ENCODE measurements at regions of chr2 and their contacts with region 1.

Region 1: GRCh38 chr2:144320491-144320890 is 199.4 kb downstream of the ZEB2 start:
- DNase-seq: peak in 9 of 10 donors; percentile 21 to 73 (median 43)
- ATAC-seq: peak; percentile 59 to 88
- H3K4me3 Mint-ChIP-seq: peak overlapping the region in 5 of 10 donors; percentile 15 to 54 (median 52)
- H3K27ac Mint-ChIP-seq: peak overlapping the region in 8 of 10 donors; percentile 0 to 94 (median 72)
- H3K4me1 Mint-ChIP-seq: peaks cover 21 to 52% (median 40%) of the 10 kb centered on the region in 4 donors
- H3K27me3 Mint-ChIP-seq: no peaks in the 10 kb centered on the region

Region 2: GRCh38 chr2:144277622-144278354 is 42.7 kb before region 1 on chr2:
- POLR2A ChIA-PET with region 1: no interaction called
- DNase-seq: no peak
- ATAC-seq: no peak
- H3K4me3 Mint-ChIP-seq: peak overlapping the region in 1 of 10 donors; percentile 43
- H3K27ac Mint-ChIP-seq: peak overlapping the region in 2 of 10 donors; percentile 30 to 61
- H3K4me1 Mint-ChIP-seq: peaks cover 2 to 29% (median 9%) of the 10 kb centered on the region in 4 donors
- H3K27me3 Mint-ChIP-seq: no peaks in the 10 kb centered on the region

Region 3: DNA sequence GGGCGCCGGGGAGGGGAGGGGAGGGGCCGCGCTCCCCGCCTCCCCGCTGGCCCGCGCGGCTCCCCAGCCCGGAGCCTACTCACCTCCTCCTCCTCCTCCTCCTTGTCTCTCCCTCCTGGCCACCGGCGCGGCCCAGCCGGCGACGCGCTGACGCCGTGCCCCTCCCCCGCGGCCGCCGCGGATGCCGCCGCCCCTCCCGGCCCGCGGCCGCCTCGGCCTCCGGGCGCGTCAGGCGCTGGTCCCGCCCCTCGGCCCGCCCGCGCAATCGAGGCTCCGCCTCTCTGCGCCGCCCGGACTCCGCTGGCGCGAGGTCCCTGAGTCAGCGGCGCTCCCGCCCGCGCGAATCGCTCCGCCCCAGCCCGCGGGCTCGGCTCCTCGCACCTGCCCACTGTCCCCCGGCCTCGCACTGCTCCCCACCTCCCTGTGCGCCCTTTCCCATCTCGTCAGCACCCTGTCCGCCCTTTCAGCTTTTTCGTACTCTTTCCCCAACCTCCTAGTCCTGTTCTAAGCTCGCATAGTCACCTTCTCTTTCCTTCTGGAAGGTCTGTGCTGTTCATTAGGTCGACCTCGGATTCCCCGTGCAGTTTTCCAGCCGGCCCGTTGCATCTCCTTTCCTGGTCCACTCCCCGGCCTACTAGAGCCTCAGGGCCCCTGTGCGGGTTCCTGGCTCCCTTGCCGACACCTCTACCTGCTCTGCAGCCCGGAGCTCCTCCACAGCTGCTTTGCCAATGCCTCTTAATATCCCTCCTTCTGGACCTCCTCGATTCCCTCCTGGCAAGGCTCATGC is 12.1 kb after region 1 on chr2:
- POLR2A ChIA-PET with region 1: interaction called, 12 read pairs
- DNase-seq: peak; percentile 74 to 89 (median 86)
- ATAC-seq: peak; percentile 88 to 89
- H3K4me3 Mint-ChIP-seq: peak overlapping the region; percentile 83 to 94 (median 90)
- H3K27ac Mint-ChIP-seq: peak overlapping the region; percentile 80 to 95 (median 90)
- H3K4me1 Mint-ChIP-seq: peaks cover 14 to 36% (median 30%) of the 10 kb centered on the region in 4 donors
- H3K27me3 Mint-ChIP-seq: peaks cover 0 to 1% (median 0%) of the 10 kb centered on the region in 5 donors

Region 4: GRCh38 chr2:144343145-144343544 is 22.7 kb after region 1 on chr2:
- POLR2A ChIA-PET with region 1: no interaction called
- DNase-seq: no peak
- ATAC-seq: no peak
- H3K4me3 Mint-ChIP-seq: no peak overlapping the region
- H3K27ac Mint-ChIP-seq: no peak overlapping the region
- H3K4me1 Mint-ChIP-seq: peaks cover 0 to 11% (median 0%) of the 10 kb centered on the region in 4 donors
- H3K27me3 Mint-ChIP-seq: peaks cover 0 to 1% (median 0%) of the 10 kb centered on the region in 5 donors

Measured in naive thymus-derived CD8-positive, alpha-beta T cell (primary cell).